ENCODE measurements at regions of chr7 and their contacts with region 1.

Region 1: GRCh38 chr7:128940494-128941322 is 3.0 kb downstream of the IRF5 start:
- DNase-seq: peak; percentile 83
- ATAC-seq: peak; percentile 61
- H3K4me3 Mint-ChIP-seq: peak overlapping the region; percentile 97
- H3K27ac Mint-ChIP-seq: peak overlapping the region; percentile 94
- H3K4me1 Mint-ChIP-seq: peaks cover 65% of the 10 kb centered on the region
- H3K27me3 Mint-ChIP-seq: no peaks in the 10 kb centered on the region
- CTCF ChIP-seq: no peak

Region 2: DNA sequence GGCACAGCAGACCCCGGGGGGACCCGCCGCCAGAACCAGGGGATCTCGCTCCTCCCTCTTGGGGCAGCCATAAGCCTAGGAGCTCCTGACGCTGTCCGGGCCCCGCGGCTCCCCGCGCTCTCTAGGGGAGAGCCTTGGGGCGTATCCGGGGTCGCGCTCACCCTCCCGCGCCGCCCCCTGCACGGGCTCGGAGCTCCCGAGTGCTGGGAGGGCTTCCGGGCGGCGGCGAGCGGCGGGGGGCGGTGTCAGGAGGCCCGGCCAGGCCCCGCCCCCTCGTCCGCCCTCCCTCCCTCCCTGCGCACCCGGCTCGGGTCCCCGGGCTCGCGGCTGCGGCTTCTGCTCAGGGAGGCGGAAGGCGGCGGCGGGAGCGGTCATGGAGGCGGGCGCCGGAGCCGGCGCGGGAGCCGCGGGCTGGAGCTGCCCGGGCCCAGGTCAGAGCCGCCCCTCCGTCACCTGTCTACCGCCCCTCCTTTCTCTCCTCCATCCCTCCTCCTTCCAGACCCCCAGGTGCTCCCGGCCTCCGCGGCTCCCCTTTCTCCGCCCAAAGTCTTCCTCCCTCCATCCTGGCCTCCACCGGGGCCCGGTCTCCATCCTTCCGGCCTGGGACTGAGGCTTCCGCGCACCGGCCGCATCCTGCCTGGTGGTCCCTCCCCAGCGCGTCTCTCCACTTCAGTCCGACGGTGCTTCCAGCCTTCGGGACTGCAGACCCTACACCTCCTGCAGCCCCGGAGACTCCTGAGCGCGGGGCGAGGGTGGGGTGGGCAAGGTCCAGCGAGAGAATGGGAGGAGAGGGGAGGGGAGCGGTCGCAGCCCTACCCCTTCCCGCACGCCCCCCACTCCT is 149.4 kb before region 1 on chr7:
- CTCF ChIA-PET with region 1: no interaction called
- POLR2A ChIA-PET with region 1: no interaction called
- intact Hi-C with region 1: loop called (anchors 5 kb)
- DNase-seq: peak; percentile 71
- ATAC-seq: peak; percentile 91
- H3K4me3 Mint-ChIP-seq: peak overlapping the region; percentile 87
- H3K27ac Mint-ChIP-seq: no peak overlapping the region
- H3K4me1 Mint-ChIP-seq: peaks cover 10% of the 10 kb centered on the region
- H3K27me3 Mint-ChIP-seq: no peaks in the 10 kb centered on the region
- CTCF ChIP-seq: no peak

Region 3: DNA sequence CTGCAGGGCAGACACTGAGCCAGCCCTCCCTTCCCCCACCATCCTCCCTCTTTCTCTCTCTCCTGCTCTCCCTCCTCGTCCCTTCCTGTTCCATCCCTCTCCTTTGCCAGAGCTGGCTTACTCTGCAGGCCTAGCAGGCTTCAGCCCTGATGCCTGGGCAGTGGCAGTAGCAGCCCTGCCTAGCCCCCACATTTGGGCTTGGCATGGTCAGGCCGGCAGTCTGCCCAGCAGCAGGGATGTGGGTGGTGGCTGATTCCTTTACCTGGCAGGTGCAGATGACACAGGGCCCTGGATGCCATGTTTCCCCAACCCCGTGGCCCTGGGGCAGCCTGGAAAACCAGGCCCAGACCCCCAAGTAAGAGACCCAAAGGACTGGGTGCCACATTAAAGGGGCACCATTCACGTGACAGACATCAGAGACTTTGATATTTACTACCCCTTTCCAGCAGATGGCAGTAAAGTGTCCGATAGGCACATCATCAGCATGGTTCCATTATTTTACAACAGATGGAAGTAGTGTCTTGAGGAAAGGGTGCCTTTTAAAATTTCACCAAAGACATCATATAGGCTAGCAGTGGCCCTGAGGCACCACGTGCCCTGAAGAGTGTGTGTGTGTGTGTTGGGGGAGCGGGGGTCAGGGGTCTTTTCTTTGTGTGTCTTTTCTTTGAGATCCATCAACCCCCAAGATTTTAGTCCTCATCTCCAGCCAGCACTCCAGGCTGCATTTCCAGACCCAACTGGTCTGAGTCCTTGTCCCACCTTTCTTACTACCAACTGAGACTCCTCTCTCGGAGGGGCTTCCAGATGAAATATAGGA is 36.1 kb before region 1 on chr7:
- CTCF ChIA-PET with region 1: interaction called, 4 read pairs
- POLR2A ChIA-PET with region 1: interaction called, 17 read pairs
- intact Hi-C with region 1: loop called (anchors 2 kb)
- DNase-seq: no peak
- ATAC-seq: peak; percentile 90
- H3K4me3 Mint-ChIP-seq: no peak overlapping the region
- H3K27ac Mint-ChIP-seq: no peak overlapping the region
- H3K4me1 Mint-ChIP-seq: peaks cover 8% of the 10 kb centered on the region
- H3K27me3 Mint-ChIP-seq: peaks cover 7% of the 10 kb centered on the region
- CTCF ChIP-seq: no peak

Region 4: GRCh38 chr7:128954830-128955802 is 14.4 kb after region 1 on chr7:
- CTCF ChIA-PET with region 1: interaction called, 15 read pairs
- POLR2A ChIA-PET with region 1: interaction called, 80 read pairs
- intact Hi-C with region 1: loop called (anchors 1 kb)
- DNase-seq: no peak
- ATAC-seq: peak; percentile 82
- H3K4me3 Mint-ChIP-seq: peak overlapping the region; percentile 61
- H3K27ac Mint-ChIP-seq: peak overlapping the region; percentile 93
- H3K4me1 Mint-ChIP-seq: peaks cover 51% of the 10 kb centered on the region
- H3K27me3 Mint-ChIP-seq: no peaks in the 10 kb centered on the region
- CTCF ChIP-seq: no peak

Region 5: GRCh38 chr7:129054438-129055293 is 114.0 kb after region 1 on chr7 and contains the start of gene TNPO3:
- CTCF ChIA-PET with region 1: no interaction called
- POLR2A ChIA-PET with region 1: interaction called, 28 read pairs
- intact Hi-C with region 1: loop called (anchors 1 kb)
- DNase-seq: peak; percentile 85
- ATAC-seq: peak; percentile 84
- H3K4me3 Mint-ChIP-seq: peak within 1 kb of the TSS; percentile 99
- H3K27ac Mint-ChIP-seq: peak within 1 kb of the TSS; percentile 99
- H3K4me1 Mint-ChIP-seq: peaks cover 47% of the 10 kb centered on the region
- H3K27me3 Mint-ChIP-seq: no peaks in the 10 kb centered on the region
- CTCF ChIP-seq: no peak
- total RNA-seq, gene TNPO3: 50.8 and 56.2 TPM in 2 replicates

Region 6: GRCh38 chr7:129136887-129137642 is 196.4 kb after region 1 on chr7:
- CTCF ChIA-PET with region 1: no interaction called
- POLR2A ChIA-PET with region 1: interaction called, 12 read pairs
- intact Hi-C with region 1: no loop called
- DNase-seq: no peak
- ATAC-seq: peak; percentile 90
- H3K4me3 Mint-ChIP-seq: peak overlapping the region; percentile 76
- H3K27ac Mint-ChIP-seq: peak overlapping the region; percentile 98
- H3K4me1 Mint-ChIP-seq: peaks cover 54% of the 10 kb centered on the region
- H3K27me3 Mint-ChIP-seq: no peaks in the 10 kb centered on the region
- CTCF ChIP-seq: no peak

Region 7: GRCh38 chr7:129611246-129612111 is 670.8 kb after region 1 on chr7 and contains the start of gene NRF1:
- CTCF ChIA-PET with region 1: no interaction called
- POLR2A ChIA-PET with region 1: no interaction called
- intact Hi-C with region 1: loop called (anchors 10 kb)
- DNase-seq: peak; percentile 95
- ATAC-seq: peak; percentile 89
- H3K4me3 Mint-ChIP-seq: peak within 1 kb of the TSS; percentile 91
- H3K27ac Mint-ChIP-seq: peak within 1 kb of the TSS; percentile 92
- H3K4me1 Mint-ChIP-seq: peaks cover 58% of the 10 kb centered on the region
- H3K27me3 Mint-ChIP-seq: no peaks in the 10 kb centered on the region
- CTCF ChIP-seq: no peak
- total RNA-seq, gene NRF1: 27.4 and 29.8 TPM in 2 replicates

Measured in activated B cell treated with CpG ODN at 0.5 μM for 24 hours (primary cell).